ENCODE measurements at regions of chr11 and their contacts with region 1.

Region 1: GRCh38 chr11:93921695-93922468 is 71.5 kb upstream of the VSTM5 start:
- DNase-seq: peak; percentile 57
- CTCF ChIP-seq: peak; percentile 43

Region 2: GRCh38 chr11:93933230-93933629 is 11.3 kb after region 1 on chr11:
- CTCF ChIA-PET with region 1: interaction called, 25 read pairs
- POLR2A ChIA-PET with region 1: no interaction called
- DNase-seq: no peak
- CTCF ChIP-seq: no peak

Region 3: DNA sequence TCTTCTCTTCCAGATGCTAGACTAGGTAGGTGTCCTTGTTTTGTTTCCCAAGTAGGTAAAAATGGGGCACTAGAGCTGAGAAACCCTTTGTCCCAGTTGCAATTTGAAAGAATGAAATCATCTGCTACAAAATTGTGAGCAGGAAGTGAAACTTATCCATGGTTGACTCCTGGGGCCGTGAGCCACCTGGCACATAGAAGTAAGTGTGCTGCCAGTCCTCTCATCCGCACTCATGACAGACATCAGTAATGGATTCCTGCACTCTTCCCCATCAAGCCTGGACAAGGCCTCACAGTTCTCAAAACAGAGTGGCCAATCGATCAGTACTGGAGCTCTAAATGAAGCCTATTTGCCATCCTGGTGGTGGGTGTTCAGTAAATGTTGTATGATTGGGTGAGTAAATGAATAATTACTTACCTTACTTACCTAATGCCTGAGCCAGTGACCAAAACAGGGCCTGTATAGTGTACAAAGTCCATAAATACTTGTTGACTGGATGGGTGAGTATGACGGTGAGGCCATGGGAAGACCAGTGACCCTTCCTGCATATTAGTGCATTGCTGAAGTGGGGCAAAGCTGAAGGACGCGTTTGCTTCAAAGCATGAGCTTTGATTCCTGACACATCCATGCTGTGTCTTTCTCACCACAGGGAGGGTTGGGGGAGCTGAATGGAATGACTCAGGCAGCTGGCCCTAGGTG is 30.3 kb after region 1 on chr11:
- CTCF ChIA-PET with region 1: no interaction called
- POLR2A ChIA-PET with region 1: no interaction called
- DNase-seq: no peak
- CTCF ChIP-seq: no peak